Activated T-helper 2 cell treated with anti-CD3 and anti-CD28 coated beads, Interferon-gamma antibody, Interleukin-2, Interleukin-4, amounts not matched to agents 10 μg/mL and 5 μg/mL and 100 μg/mL, durations not matched to agents 14 hours and 24 hours and 36 hours (primary cell): ENCODE measurements at regions of chr15 and their contacts with region 1.

Region 1: DNA sequence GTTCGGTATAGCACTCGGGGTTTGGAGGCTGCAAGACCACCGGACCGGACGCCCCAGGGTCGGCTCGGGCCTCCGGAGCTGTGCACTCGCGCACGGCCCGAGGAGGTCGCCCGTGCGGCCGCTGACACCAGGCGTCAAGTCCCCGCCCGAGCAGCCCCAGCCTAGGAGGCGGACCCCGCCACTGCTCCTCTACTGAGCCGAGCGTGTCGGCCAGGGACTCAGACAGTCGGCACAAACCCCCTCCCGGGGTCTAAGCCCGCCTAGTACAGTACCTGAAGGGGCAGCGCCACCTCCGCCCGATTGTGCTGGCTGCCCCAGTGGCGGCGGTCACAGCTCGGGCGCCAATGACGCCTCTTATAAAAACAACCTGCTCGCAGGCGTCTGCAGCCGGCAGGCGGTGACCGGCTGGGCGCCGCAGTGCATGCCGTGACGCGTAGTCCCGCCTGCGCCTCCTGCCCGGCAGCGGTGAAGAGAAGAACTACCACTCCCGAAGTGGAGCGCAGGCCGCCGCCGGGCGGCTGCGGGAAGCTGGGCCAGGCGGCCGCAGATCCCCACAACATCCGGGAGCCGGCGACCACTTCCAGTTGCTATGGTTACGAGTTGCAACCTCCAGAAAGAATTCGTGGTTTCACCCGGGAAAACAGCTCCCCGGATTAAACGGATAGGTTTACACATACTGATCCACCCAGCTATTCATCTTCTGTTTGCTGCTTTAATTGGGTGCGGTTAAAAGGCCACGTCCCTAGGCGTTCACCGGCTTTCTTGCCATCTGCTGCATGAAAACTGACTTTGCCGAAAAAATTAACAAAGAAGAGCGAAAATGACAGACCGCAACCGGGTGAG is at the starts of genes CCPG1 and PIERCE2:
- DNase-seq: peak; percentile 89
- H3K4me3 Mint-ChIP-seq: peak within 1 kb of the TSS; percentile 90
- H3K27ac Mint-ChIP-seq: peak within 1 kb of the TSS; percentile 86
- H3K4me1 Mint-ChIP-seq: peaks cover 23% of the 10 kb centered on the region
- H3K27me3 Mint-ChIP-seq: peaks cover 1% of the 10 kb centered on the region
- total RNA-seq, gene CCPG1: 8.9 and 9.8 TPM in 2 replicates
- total RNA-seq, gene PIERCE2: not detected in 2 replicates

Region 2: DNA sequence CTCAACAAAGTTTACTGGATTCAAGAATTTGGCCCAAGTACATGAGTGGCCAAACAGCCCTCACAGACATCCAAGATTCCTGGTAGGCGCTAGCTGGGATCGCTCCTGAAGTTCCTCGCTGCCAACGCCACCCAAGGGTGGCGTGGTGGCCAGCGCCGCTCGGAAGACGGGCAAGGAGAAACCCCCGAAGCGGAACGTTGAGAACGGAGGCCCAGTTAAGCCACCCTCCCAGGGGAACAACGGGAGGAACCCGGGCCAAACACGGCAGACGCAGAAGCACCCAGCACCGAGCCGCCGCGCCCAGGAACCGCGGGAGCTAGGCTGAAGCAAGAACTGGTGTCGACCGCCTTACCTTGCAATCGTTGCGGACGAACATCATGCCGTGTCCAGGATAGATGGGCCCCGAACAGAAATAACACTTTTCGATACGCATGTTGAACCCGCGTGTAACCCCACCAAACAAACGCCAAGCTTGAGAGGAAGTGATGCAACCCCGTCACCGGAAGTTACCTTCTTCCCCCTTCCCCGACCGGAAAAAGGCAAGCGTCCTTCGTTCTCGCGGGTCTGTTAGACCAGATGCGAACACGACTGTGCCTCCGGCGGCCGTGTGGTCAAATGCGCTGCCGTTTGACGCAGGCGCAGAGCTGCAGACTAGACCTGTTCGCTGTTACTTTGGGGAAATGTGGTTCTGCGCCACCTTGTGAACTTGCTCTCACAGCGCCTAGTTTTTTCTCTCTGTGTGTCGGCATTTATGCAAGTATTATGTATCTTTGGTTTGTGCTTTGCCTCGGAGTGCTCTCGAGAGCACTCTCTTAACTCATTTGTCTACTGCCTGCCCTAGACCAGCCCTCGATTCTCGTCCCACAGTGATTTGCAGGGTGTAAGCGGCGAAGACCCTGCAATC is 211.5 kb before region 1 on chr15 and contains the start of gene RSL24D1:
- intact Hi-C with region 1: loop called (anchors 1 kb)
- DNase-seq: peak; percentile 95
- H3K4me3 Mint-ChIP-seq: no peak within 1 kb of the TSS
- H3K27ac Mint-ChIP-seq: no peak within 1 kb of the TSS
- H3K4me1 Mint-ChIP-seq: peaks cover 20% of the 10 kb centered on the region
- H3K27me3 Mint-ChIP-seq: no peaks in the 10 kb centered on the region
- total RNA-seq, gene RSL24D1: 94.0 and 97.0 TPM in 2 replicates

Region 3: DNA sequence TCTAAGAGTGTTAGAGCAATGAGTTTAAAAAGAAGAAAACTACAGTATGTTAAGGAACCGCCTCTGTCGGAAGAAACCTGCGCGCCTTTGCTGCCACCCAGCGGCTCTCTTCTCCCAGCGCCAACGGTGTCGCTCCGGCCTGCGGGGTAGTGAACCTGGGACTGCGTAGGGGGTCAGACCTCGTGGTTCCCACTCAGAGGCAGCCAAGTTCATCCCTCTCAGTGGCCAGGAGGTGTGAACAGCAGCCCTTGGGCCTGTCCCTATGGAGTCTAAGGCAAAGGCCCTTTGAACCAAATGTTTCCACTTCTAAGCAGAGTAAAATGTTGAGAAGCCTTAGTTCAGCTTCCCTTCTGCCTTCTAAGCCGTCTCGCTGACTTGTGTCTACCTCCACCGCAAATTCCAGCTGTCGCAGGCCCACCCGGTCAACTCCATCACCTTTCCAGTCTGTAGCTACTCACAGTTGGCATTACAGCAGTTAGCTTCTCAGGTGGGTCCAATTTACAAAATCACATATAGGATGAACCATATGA is 117.6 kb before region 1 on chr15:
- intact Hi-C with region 1: loop called (anchors 1 kb)
- DNase-seq: peak; percentile 77
- H3K4me3 Mint-ChIP-seq: peak overlapping the region; percentile 78
- H3K27ac Mint-ChIP-seq: peak overlapping the region; percentile 83
- H3K4me1 Mint-ChIP-seq: peaks cover 31% of the 10 kb centered on the region
- H3K27me3 Mint-ChIP-seq: no peaks in the 10 kb centered on the region

Region 4: GRCh38 chr15:55318588-55319494 is 89.3 kb before region 1 on chr15 and contains the starts of genes PIGB and PIGBOS1:
- intact Hi-C with region 1: loop called (anchors 1 kb)
- DNase-seq: peak; percentile 82
- H3K4me3 Mint-ChIP-seq: peak within 1 kb of the TSS; percentile 100
- H3K27ac Mint-ChIP-seq: peak within 1 kb of the TSS; percentile 98
- H3K4me1 Mint-ChIP-seq: peaks cover 52% of the 10 kb centered on the region
- H3K27me3 Mint-ChIP-seq: no peaks in the 10 kb centered on the region
- total RNA-seq, gene PIGB: 19.7 and 21.0 TPM in 2 replicates
- total RNA-seq, gene PIGBOS1: 9.5 and 12.3 TPM in 2 replicates

Region 5: GRCh38 chr15:55357774-55358173 is 50.4 kb before region 1 on chr15:
- intact Hi-C with region 1: loop called (anchors 5 kb)
- DNase-seq: no peak
- H3K4me3 Mint-ChIP-seq: no peak overlapping the region
- H3K27ac Mint-ChIP-seq: no peak overlapping the region
- H3K4me1 Mint-ChIP-seq: no peaks in the 10 kb centered on the region
- H3K27me3 Mint-ChIP-seq: no peaks in the 10 kb centered on the region

Region 6: DNA sequence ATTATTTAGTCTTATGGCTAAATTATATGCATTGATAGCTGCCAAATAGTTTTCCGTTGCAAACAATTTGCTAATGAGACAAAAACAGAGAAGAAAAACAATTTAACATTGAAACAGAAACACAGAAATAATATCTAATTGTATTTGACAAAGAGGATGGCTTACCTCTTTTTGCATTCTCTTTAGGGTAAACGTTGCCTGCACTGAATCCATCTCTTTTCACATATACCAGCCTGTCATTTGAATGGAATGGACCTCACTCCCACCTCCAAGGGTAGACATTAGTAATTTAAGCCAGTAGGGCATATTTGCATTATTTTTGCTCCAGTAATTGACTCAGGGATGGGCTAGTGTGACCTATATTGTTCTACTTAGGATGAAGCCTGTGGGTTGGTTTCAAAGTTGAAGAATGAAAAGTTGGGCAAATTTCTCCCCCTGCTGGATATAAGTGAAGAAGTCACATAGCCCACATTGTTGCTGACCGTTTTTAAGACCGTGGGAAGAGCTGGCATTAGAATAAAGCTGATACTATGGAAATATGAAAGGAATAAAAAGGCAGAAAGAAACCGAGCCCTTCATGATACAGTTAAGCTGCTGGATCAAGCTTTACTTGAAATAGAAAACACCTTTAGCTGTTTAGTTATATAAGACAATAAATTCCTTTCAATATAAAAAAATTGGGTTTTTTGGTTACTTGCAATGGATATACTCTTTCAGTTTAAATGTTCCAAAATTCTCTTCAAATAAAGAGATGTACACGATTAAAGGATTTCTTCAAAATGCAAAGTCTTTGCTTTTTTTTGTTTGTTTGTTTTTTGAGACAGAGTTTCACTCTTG is 27.0 kb after region 1 on chr15:
- intact Hi-C with region 1: loop called (anchors 1 kb)
- DNase-seq: no peak
- H3K4me3 Mint-ChIP-seq: no peak overlapping the region
- H3K27ac Mint-ChIP-seq: no peak overlapping the region
- H3K4me1 Mint-ChIP-seq: peaks cover 5% of the 10 kb centered on the region
- H3K27me3 Mint-ChIP-seq: no peaks in the 10 kb centered on the region